HEK293T (cell line): ENCODE measurements at regions of chr10 and their contacts with region 1.

Region 1: DNA sequence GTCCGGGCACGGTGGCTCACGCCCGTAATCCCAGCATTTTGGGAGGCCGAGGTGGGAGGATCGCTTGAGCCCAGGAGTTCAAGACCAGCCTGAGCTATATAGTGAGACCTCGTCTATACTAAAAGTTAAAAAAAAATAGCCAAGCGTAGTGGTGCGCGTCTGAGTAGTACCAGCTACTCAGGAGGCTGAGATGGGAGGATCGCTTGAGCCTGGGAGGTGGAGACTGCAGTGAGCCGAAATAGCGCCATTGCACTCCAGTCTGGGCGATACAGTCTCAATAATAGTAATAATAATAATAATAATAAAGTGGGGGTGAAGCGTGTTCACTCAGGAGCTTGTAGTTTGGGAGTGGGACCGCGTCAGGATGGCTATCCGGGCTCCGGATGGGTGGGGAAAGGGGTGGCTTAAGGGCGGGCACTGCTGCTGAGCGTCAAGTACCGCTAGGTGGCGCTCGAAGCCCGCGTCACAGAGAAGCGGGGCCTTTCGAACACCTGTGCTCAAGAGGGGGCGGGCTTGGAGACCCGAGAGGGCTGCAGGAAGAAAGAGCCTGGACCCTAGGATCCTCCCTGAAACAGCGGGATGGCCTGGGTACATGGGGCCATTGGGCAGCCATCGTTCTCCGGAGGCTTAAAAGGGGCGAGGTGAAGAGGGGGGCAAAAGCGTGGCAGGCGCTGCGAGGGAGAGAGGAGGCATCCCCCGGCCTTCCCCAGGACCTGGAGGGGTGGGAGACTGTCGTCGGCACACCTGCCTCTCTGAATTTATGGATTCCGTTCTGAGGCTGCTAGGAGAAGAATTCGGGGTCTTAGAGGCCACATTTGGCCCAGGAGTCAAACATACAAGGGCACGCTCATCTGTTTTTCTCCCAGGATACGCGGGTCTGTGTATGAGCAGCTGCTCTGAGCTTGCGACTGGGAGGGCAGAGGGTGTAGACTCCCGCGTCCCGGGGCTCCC is 14.5 kb downstream of the LBX1 start:
- DNase-seq: peak; percentile 87

Region 2: GRCh38 chr10:101189541-101190401 is 24.9 kb before region 1 on chr10:
- CTCF ChIA-PET with region 1: no interaction called
- POLR2A ChIA-PET with region 1: no interaction called
- DNase-seq: no peak

Region 3: GRCh38 chr10:101230183-101230917 is 15.6 kb after region 1 on chr10:
- CTCF ChIA-PET with region 1: interaction called, 19 read pairs
- POLR2A ChIA-PET with region 1: interaction called, 5 read pairs
- DNase-seq: peak; percentile 75

Region 4: DNA sequence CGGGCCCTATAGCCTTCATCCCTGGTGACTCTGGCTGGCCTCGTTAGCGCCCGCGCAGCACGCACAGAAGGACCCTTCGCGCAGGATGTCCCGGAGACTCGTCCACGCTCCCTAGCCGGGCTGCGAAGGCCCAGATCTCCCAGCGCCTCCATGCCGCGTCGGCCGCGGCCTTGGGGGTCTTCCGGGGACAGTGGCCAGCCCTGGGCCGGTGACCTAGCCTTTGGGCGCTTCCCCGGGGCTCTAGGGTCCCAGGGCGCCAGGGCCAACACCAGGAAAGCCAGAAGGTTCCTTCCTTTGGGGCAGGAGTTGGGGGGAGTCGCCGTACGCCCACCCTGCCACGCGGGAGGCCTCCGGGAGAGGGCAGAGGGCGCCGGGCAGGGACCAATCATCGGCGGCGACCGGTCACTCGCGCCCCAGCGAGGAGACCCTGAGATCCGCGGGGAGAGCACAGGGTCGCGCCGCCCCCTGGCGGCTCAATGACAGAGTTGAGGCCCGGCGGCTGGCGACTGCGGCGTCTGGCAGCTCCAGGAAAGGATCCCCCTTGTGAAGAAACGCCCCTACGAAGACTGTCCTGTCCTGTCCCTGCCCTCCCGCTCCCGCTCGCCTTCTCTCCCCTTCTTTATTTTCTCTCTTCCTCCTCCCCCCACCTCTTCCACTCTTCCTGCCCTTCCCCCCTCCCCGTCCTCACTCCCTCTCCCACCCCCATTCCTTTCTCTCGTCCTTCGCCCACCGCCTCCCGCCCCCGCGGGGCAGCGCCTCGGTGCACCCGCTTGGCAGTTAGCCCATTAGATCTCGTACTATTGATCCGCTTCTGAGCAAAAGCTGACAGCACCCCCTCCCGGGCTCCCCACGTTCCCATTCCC is 76.8 kb after region 1 on chr10:
- CTCF ChIA-PET with region 1: interaction called, 79 read pairs
- POLR2A ChIA-PET with region 1: interaction called, 13 read pairs
- DNase-seq: peak; percentile 91

Region 5: GRCh38 chr10:101303087-101303703 is 88.5 kb after region 1 on chr10:
- CTCF ChIA-PET with region 1: interaction called, 14 read pairs
- POLR2A ChIA-PET with region 1: no interaction called
- DNase-seq: no peak

Region 6: DNA sequence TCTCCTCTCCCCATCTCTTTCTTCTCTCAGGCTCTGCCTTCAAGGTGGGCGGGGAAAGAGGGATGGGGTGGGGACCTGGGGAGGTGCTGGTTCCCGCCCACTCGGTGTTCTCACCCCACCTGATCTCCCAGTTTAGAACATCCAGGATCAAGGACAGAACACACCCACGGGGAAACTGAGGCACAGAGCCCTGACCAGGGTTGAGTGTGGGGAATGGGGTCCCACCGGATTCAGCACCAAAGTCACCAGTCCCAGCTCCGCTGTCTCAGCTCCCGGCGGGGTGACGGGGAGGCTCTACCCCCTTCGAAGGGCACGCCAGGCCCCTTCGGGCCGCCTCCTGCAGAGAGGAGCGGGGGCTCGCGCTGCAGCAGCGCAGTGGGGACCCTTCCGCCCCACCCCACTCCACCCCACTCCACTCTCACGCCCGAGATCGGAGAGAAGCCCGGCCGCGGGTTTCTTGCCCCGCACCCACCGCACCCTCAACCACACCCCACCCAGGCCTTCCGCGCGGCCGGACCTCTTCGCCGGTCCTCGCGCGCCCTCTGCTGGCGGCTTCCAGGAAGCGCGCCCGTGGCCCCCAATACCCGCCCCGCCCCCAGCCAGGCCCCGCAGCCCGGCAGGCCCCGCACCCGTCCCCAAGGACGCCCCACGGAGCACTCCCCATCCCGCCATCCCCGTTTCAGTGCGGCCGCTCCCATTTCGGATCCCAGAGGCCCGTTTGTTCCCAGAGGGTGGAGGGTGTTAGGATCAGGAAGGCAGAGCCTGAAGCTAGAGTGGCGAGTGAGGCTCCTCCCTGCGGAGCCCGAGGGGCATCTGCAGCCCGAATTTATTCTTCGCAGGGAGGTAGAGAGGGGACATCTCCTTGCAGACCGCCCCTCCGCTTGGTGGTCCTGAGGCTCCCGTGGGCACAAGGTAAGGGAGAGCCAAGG is 355.4 kb after region 1 on chr10:
- CTCF ChIA-PET with region 1: interaction called, 14 read pairs
- POLR2A ChIA-PET with region 1: interaction called, 6 read pairs
- DNase-seq: peak; percentile 92